Activated CD4-positive, alpha-beta memory T cell treated with anti-CD3 and anti-CD28 coated beads for 36 hours (primary cell): ENCODE measurements at regions of chr20 and their contacts with region 1.

Region 1: GRCh38 chr20:21303061-21303871 is at the start of gene XRN2:
- DNase-seq: peak; percentile 97
- H3K4me3 Mint-ChIP-seq: peak within 1 kb of the TSS; percentile 93
- H3K27ac Mint-ChIP-seq: peak within 1 kb of the TSS; percentile 99
- H3K4me1 Mint-ChIP-seq: peaks cover 34% of the 10 kb centered on the region
- H3K27me3 Mint-ChIP-seq: no peaks in the 10 kb centered on the region
- total RNA-seq, gene XRN2: 91.0 to 94.4 TPM

Region 2: DNA sequence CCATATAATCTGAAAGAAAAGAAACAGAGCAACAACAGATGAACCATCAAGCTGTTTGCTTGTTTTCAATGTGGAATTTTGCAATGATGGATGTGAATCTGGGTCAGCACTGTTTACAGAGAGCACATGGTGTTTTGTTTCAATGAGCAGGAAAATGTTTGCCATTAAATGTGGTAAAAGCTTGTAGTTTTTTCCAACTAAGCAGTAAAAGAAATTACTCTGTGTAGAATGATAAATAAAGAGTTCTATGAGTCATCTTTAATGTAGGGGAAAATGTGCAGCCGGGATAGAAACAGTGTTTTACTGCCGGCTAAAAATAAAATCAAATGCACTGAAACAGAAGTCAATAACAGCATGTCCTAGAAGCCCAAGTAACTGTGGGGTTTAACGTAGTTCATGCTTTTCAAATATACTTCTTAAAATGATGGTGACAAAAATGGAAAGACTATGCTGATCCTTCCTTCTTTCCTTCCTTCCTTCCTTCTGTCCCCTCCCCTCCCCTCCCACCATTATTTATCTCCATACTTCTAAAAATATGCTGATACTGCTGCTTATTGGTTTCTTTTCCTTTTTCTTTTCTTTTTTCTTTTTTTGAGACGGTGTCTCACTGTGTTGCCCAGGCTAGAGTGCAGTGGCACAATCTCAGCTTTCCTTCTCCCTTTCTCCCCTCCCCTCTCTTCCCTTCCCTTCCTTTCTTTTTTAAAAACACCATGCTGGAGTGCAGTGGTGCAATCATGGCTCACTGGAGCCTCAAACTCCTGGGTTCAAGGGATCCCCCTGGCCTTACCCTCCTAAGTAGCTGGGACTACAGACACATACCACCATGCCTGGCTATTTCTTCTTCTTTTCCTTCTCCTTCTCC is 1292.4 kb before region 1 on chr20:
- CTCF ChIA-PET with region 1: no interaction called
- POLR2A ChIA-PET with region 1: interaction called, 3 read pairs
- intact Hi-C with region 1: loop called (anchors 5 kb)
- DNase-seq: no peak
- H3K4me3 Mint-ChIP-seq: no peak overlapping the region
- H3K27ac Mint-ChIP-seq: no peak overlapping the region
- H3K4me1 Mint-ChIP-seq: peaks cover 9% of the 10 kb centered on the region
- H3K27me3 Mint-ChIP-seq: peaks cover 8% of the 10 kb centered on the region

Region 3: GRCh38 chr20:20712474-20713243 is 590.6 kb before region 1 on chr20 and contains the start of gene RALGAPA2:
- CTCF ChIA-PET with region 1: no interaction called
- POLR2A ChIA-PET with region 1: no interaction called
- intact Hi-C with region 1: loop called (anchors 1 kb)
- DNase-seq: peak; percentile 95
- H3K4me3 Mint-ChIP-seq: peak within 1 kb of the TSS; percentile 76
- H3K27ac Mint-ChIP-seq: peak within 1 kb of the TSS; percentile 94
- H3K4me1 Mint-ChIP-seq: peaks cover 25% of the 10 kb centered on the region
- H3K27me3 Mint-ChIP-seq: peaks cover 2% of the 10 kb centered on the region
- total RNA-seq, gene RALGAPA2: 15.9 to 16.6 TPM

Region 4: DNA sequence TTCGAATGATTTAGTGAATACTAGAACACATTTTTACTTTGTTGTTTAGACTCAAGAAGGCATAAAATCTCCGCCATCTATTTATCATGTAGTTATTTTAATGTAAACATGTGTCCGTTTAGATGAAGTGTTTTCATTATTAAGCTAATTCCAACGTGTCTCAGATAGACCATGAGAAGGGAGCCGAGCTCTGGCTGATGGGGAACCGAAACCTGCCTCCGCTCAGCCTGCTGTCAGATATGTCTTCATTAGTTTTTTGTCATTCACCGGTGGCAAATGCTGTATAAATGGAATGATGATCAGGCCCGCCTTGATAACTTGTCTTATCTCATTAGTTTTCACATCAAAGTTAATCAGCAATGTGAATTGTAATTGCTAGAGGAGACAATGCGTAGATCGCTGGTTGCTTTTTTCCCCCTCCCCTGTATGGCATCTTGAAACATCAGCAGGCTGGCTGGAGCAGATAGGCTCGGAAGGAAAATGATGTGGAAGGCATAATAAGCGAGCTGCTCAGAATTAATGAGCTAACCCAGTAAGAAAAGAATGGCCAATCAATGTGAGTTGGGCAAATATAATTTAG is 333.5 kb before region 1 on chr20:
- CTCF ChIA-PET with region 1: no interaction called
- POLR2A ChIA-PET with region 1: no interaction called
- intact Hi-C with region 1: no loop called
- DNase-seq: no peak
- H3K4me3 Mint-ChIP-seq: no peak overlapping the region
- H3K27ac Mint-ChIP-seq: no peak overlapping the region
- H3K4me1 Mint-ChIP-seq: no peaks in the 10 kb centered on the region
- H3K27me3 Mint-ChIP-seq: peaks cover 4% of the 10 kb centered on the region

Region 5: DNA sequence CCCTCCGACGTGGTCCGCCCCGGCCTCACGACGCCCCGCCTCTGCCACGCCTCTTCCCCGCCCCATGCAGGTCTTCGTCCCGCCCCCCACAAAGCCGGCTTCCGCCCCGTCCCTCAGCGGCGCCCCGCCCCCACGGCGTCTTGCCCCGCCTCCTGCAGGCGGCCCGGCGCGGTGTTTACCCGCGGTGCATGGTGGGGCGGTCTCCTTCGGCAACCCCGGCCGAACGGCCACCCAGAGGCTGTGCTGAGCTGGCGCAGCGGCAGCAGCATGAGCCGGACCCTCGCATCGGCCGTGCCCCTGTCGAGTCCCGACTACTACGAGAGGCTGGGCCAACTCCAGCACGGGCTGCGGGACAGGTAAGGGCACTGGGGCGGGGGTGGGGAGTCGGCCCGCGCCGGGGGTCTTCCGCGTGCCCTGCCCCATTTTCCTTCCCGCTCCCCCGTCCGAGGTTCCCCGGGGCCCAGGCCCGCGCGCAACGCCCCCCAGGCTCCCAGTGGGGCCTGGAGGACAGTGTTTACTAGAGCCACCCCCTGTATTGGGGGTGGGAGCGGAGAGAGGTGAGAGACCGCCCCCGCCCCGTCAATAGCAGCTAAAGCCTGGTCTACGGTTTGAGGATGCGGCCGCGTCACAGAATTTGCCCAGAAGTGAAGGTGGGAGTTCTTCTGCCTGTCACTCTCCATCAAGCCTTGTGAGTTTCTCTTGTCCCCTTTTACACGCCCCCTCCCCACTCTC is 177.3 kb before region 1 on chr20 and contains the start of gene KIZ:
- CTCF ChIA-PET with region 1: no interaction called
- POLR2A ChIA-PET with region 1: no interaction called
- intact Hi-C with region 1: loop called (anchors 2 kb)
- DNase-seq: peak; percentile 98
- H3K4me3 Mint-ChIP-seq: peak within 1 kb of the TSS; percentile 81
- H3K27ac Mint-ChIP-seq: peak within 1 kb of the TSS; percentile 69
- H3K4me1 Mint-ChIP-seq: peaks cover 18% of the 10 kb centered on the region
- H3K27me3 Mint-ChIP-seq: peaks cover 3% of the 10 kb centered on the region
- total RNA-seq, gene KIZ: 13.3 to 13.5 TPM

Region 6: GRCh38 chr20:21251278-21251677 is 52.0 kb before region 1 on chr20:
- CTCF ChIA-PET with region 1: interaction called, 3 read pairs
- POLR2A ChIA-PET with region 1: interaction called, 3 read pairs
- intact Hi-C with region 1: loop called (anchors 5 kb)
- DNase-seq: peak; percentile 45
- H3K4me3 Mint-ChIP-seq: peak overlapping the region; percentile 39
- H3K27ac Mint-ChIP-seq: peak overlapping the region; percentile 73
- H3K4me1 Mint-ChIP-seq: peaks cover 12% of the 10 kb centered on the region
- H3K27me3 Mint-ChIP-seq: peaks cover 2% of the 10 kb centered on the region

Region 7: GRCh38 chr20:21315138-21315537 is 11.9 kb after region 1 on chr20:
- CTCF ChIA-PET with region 1: interaction called, 3 read pairs
- POLR2A ChIA-PET with region 1: interaction called, 6 read pairs
- intact Hi-C with region 1: loop called (anchors 1 kb)
- DNase-seq: peak; percentile 59
- H3K4me3 Mint-ChIP-seq: no peak overlapping the region
- H3K27ac Mint-ChIP-seq: peak overlapping the region; percentile 38
- H3K4me1 Mint-ChIP-seq: peaks cover 81% of the 10 kb centered on the region
- H3K27me3 Mint-ChIP-seq: no peaks in the 10 kb centered on the region

Region 8: GRCh38 chr20:21323640-21324039 is 20.4 kb after region 1 on chr20:
- CTCF ChIA-PET with region 1: no interaction called
- POLR2A ChIA-PET with region 1: interaction called, 4 read pairs
- intact Hi-C with region 1: loop called (anchors 1 kb)
- DNase-seq: no peak
- H3K4me3 Mint-ChIP-seq: no peak overlapping the region
- H3K27ac Mint-ChIP-seq: peak overlapping the region; percentile 45
- H3K4me1 Mint-ChIP-seq: peaks cover 65% of the 10 kb centered on the region
- H3K27me3 Mint-ChIP-seq: no peaks in the 10 kb centered on the region